ENCODE measurements at regions of chr16 and their contacts with region 1.

Region 1: DNA sequence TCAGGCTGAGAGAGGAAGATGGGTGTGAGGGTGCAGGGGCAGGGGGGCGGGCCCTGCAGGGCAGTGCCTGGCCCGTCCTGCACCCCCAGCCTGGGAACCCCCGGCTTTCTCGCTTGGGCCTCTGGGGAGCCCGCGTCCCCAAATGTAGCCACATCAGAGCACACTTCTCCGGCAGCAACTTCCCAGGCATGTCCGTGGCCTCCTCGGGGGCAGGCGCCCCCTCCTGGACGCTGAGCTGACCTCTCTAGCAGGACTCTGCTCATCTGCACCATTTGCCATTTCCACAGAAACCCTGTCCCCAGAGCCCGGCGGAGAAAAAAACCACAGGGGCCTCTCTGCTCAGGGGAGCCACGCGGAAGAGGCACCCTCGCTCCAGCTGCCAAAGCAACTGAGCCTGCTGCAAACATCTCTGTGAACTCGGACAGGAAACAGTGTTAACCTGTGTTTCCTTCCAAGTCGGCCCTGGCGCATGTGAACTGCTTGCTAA is 63.4 kb downstream of the KLHDC4 start:
- DNase-seq: peak in 8 of 10 donors; percentile 7 to 42 (median 35)
- ATAC-seq: peak; percentile 69 to 74
- H3K4me3 Mint-ChIP-seq: peak overlapping the region; percentile 47 to 82 (median 68)
- H3K27ac Mint-ChIP-seq: peak overlapping the region; percentile 80 to 92 (median 88)
- H3K4me1 Mint-ChIP-seq: peaks cover 11 to 55% (median 46%) of the 10 kb centered on the region in 4 donors
- H3K27me3 Mint-ChIP-seq: no peaks in the 10 kb centered on the region

Region 2: GRCh38 chr16:87713451-87714229 is 11.3 kb after region 1 on chr16:
- POLR2A ChIA-PET with region 1: interaction called, 13 read pairs
- DNase-seq: peak in 9 of 10 donors; percentile 22 to 85 (median 54)
- ATAC-seq: peak; percentile 94 to 97
- H3K4me3 Mint-ChIP-seq: peak overlapping the region in 9 of 10 donors; percentile 29 to 80 (median 57)
- H3K27ac Mint-ChIP-seq: peak overlapping the region; percentile 25 to 98 (median 94)
- H3K4me1 Mint-ChIP-seq: peaks cover 10 to 53% (median 39%) of the 10 kb centered on the region in 4 donors
- H3K27me3 Mint-ChIP-seq: no peaks in the 10 kb centered on the region

Measured in naive thymus-derived CD8-positive, alpha-beta T cell (primary cell).